AG04450 (cell line): ENCODE measurements at regions of chr16 and their contacts with region 1.

Region 1: GRCh38 chr16:74709441-74709877 is 8.8 kb upstream of the MLKL start:
- DNase-seq: peak; percentile 38
- H3K4me3 ChIP-seq: no peak overlapping the region
- H3K27ac ChIP-seq: no peak overlapping the region
- H3K27me3 ChIP-seq: peaks cover 8% of the 10 kb centered on the region
- CTCF ChIP-seq: peak; percentile 99

Region 2: GRCh38 chr16:74695450-74696422 is 13.7 kb before region 1 on chr16:
- CTCF ChIA-PET with region 1: interaction called, 24 read pairs
- POLR2A ChIA-PET with region 1: no interaction called
- DNase-seq: peak; percentile 78
- H3K4me3 ChIP-seq: peak overlapping the region; percentile 59
- H3K27ac ChIP-seq: no peak overlapping the region
- H3K27me3 ChIP-seq: no peaks in the 10 kb centered on the region
- CTCF ChIP-seq: no peak

Region 3: DNA sequence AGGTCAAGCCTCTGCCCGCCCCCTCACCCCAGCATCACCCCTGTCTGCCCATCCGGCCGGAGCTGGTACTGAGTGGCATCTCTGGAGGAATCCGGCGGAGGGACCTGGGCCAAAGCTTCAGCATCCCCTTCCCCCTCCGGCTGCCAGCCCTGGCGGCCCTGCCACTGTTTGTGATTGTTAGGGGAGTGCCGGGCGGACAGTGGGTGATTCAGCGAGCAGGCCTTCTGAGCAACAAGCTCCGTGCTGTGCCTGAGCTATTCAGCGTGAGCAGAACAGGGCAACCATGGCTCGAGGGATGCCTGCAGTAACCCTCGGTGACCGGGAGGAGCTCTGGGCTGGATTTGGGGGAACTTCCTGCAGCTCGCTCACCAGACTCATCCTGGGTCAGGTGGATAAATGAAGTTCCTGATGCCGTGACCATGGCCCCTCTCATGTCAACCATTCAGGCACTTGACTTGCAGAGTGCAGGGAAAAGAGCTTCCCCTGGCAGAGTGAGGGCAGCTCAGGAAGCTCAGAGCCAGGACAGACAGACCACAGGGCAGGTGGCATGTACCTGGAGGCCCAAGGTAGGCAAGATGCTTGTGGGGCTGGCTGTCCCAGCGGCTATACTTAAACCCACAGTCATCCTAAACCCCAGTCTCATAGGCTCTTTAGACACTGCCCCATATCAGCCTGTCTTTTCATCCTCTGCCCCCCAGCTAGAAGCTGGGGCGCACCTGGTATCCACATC is 15.5 kb after region 1 on chr16:
- CTCF ChIA-PET with region 1: interaction called, 16 read pairs
- POLR2A ChIA-PET with region 1: interaction called, 4 read pairs
- DNase-seq: peak; percentile 44
- H3K4me3 ChIP-seq: no peak overlapping the region
- H3K27ac ChIP-seq: peak overlapping the region; percentile 11
- H3K27me3 ChIP-seq: no peaks in the 10 kb centered on the region
- CTCF ChIP-seq: peak; percentile 54

Region 4: GRCh38 chr16:74813109-74813641 is 103.7 kb after region 1 on chr16:
- CTCF ChIA-PET with region 1: interaction called, 15 read pairs
- POLR2A ChIA-PET with region 1: no interaction called
- DNase-seq: peak; percentile 4
- H3K4me3 ChIP-seq: no peak overlapping the region
- H3K27ac ChIP-seq: no peak overlapping the region
- H3K27me3 ChIP-seq: peaks cover 16% of the 10 kb centered on the region
- CTCF ChIP-seq: peak; percentile 90